RWPE1 (cell line): ENCODE measurements at regions of chr3 and their contacts with region 1.

Region 1: DNA sequence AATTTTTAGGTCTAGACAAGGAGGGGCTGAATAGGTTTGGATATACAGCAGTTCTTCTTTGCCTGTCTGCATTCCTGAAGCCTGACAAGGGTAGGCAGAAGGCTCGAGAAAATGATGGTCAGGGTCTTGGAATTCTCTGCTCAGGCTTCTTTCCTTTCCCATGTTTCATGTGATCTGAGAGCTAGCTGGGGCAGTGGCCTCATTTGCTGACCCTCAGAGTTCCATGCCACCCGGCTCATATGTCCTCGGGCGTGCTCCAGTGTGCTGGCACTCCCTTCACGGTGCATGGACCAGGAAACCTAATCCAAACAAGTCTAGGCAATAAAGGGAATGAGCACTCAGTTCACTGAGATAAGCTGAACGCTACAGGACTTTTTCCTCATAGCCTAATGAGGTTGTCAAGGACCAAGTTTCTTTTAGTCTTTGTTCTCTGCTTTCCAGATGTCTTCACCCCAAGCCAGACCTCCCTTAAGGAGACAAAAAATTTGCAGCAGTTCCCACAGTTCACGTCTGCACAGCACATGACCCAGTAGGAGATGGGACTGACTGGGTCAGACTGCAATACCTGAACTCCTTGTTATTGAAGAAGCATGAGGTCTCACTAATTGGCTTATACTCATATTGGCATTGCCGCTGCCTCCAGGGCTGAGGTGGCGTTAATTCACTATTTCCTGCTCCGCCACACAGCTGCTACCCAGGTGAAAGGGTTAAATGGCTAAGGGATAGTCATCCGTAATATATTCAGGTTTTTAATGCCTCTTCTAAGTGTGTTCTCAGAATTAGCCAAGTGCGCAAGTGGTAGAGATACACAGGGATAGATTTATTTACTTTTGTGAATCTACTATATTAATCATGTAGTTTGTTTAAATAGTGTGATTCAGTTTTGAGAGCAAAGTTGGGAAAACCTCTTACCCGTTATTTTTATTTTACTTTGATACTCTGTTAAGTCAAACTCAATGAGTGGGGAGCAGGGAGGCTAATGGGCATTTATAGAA is 15.3 kb upstream of the RTP4 start:
- DNase-seq: no peak
- H3K27ac ChIP-seq: no peak overlapping the region
- CTCF ChIP-seq: no peak

Region 2: GRCh38 chr3:187533797-187534196 is 180.9 kb after region 1 on chr3:
- CTCF ChIA-PET with region 1: interaction called, 12 read pairs
- POLR2A ChIA-PET with region 1: no interaction called
- DNase-seq: no peak
- H3K27ac ChIP-seq: no peak overlapping the region
- CTCF ChIP-seq: no peak